ENCODE measurements at regions of chr19 and their contacts with region 1.

Region 1: GRCh38 chr19:21604351-21604926 is 99.0 kb downstream of the ZNF429 start:
- DNase-seq: no peak
- ATAC-seq: peak; percentile 61
- H3K4me3 Mint-ChIP-seq: peak overlapping the region; percentile 87
- H3K27ac Mint-ChIP-seq: peak overlapping the region; percentile 91
- H3K4me1 Mint-ChIP-seq: peaks cover 16% of the 10 kb centered on the region
- H3K27me3 Mint-ChIP-seq: no peaks in the 10 kb centered on the region

Region 2: DNA sequence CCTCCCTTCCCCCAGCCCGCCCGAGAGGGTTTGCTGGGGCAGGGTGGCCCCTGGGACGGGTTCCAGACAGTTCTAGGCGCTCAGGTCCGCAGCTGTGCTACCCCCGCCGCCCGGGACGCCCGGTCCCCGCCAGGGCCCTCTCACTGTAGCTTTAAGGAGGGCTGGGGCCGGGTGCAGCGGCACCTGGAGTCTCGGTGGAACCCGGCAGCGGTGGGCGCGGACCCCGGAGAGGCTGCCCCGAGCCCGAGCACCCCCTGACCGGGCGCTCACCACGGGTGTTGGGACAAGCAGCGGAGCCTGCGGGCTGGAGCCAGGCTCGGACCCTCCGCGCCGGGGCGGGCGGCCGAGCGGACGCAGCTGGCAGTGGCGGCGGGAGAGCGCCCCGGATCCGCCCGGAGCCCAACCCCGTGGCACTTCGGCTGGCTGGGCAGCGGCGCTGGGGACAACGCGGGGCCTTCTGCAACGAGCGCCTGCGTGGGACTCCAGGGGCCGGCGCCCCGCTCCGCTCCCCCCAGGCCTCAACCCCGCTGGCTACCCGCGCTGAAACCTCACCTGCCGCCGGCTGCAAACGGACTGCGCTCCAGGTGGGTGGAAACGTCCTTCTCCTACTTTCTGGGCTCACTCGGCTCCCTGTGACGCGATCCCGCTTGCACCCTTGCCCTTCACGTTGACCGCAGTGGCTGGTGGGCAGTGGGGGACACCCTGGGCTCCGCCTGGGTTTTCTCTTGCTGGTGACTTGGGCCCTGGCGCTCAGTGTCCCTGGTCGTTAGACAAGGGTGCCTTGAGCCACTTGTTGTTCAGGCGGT is 17.9 kb before region 1 on chr19:
- POLR2A ChIA-PET with region 1: interaction called, 11 read pairs
- DNase-seq: peak; percentile 55
- ATAC-seq: peak; percentile 61
- H3K4me3 Mint-ChIP-seq: peak overlapping the region; percentile 73
- H3K27ac Mint-ChIP-seq: peak overlapping the region; percentile 30
- H3K4me1 Mint-ChIP-seq: peaks cover 3% of the 10 kb centered on the region
- H3K27me3 Mint-ChIP-seq: peaks cover 1% of the 10 kb centered on the region

Region 3: GRCh38 chr19:21617740-21618339 is 13.4 kb after region 1 on chr19:
- POLR2A ChIA-PET with region 1: no interaction called
- DNase-seq: no peak
- ATAC-seq: no peak
- H3K4me3 Mint-ChIP-seq: no peak overlapping the region
- H3K27ac Mint-ChIP-seq: no peak overlapping the region
- H3K4me1 Mint-ChIP-seq: no peaks in the 10 kb centered on the region
- H3K27me3 Mint-ChIP-seq: no peaks in the 10 kb centered on the region